Ovary (tissue), 10 donors: ENCODE measurements at regions of chr6 and their contacts with region 1.

Region 1: GRCh38 chr6:7725849-7726415 is at the start of gene BMP6:
- DNase-seq: peak; percentile 87 to 92 (median 91)
- H3K4me3 ChIP-seq: peak within 1 kb of the TSS; percentile 44
- H3K27ac ChIP-seq: no peak within 1 kb of the TSS
- H3K4me1 ChIP-seq: peaks cover 4% of the 10 kb centered on the region
- H3K27me3 ChIP-seq: no peaks in the 10 kb centered on the region
- CTCF ChIP-seq: peak in 1 of 3 donors; percentile 18
- EP300 ChIP-seq: no peak
- POLR2A ChIP-seq: no peak
- total RNA-seq, gene BMP6: 3.4 to 15.9 (median 6.7) TPM

Region 2: GRCh38 chr6:7784706-7785105 is 58.8 kb after region 1 on chr6:
- intact Hi-C with region 1: loop called in 2 of 4 experiments (anchors 2 to 5 kb)
- DNase-seq: no peak
- H3K4me3 ChIP-seq: no peak overlapping the region
- H3K27ac ChIP-seq: no peak overlapping the region
- H3K4me1 ChIP-seq: peaks cover 30% of the 10 kb centered on the region
- H3K27me3 ChIP-seq: no peaks in the 10 kb centered on the region
- CTCF ChIP-seq: no peak
- EP300 ChIP-seq: no peak
- POLR2A ChIP-seq: no peak

Region 3: GRCh38 chr6:7986219-7986618 is 260.3 kb after region 1 on chr6:
- intact Hi-C with region 1: loop called in 3 of 4 experiments (anchors 5 to 10 kb)
- DNase-seq: no peak
- H3K4me3 ChIP-seq: no peak overlapping the region
- H3K27ac ChIP-seq: no peak overlapping the region
- H3K4me1 ChIP-seq: no peaks in the 10 kb centered on the region
- H3K27me3 ChIP-seq: no peaks in the 10 kb centered on the region
- CTCF ChIP-seq: no peak
- EP300 ChIP-seq: no peak
- POLR2A ChIP-seq: no peak

Region 4: GRCh38 chr6:8006208-8006607 is 280.3 kb after region 1 on chr6:
- intact Hi-C with region 1: loop called in 1 of 4 experiments (anchors 5 kb)
- DNase-seq: no peak
- H3K4me3 ChIP-seq: no peak overlapping the region
- H3K27ac ChIP-seq: no peak overlapping the region
- H3K4me1 ChIP-seq: no peaks in the 10 kb centered on the region
- H3K27me3 ChIP-seq: no peaks in the 10 kb centered on the region
- CTCF ChIP-seq: peak in 2 of 3 donors; percentile 36 to 60
- EP300 ChIP-seq: no peak
- POLR2A ChIP-seq: no peak

Region 5: GRCh38 chr6:8229915-8230756 is 504.2 kb after region 1 on chr6:
- intact Hi-C with region 1: loop called in 1 of 4 experiments (anchors 10 kb)
- DNase-seq: no peak
- H3K4me3 ChIP-seq: no peak overlapping the region
- H3K27ac ChIP-seq: no peak overlapping the region
- H3K4me1 ChIP-seq: no peaks in the 10 kb centered on the region
- H3K27me3 ChIP-seq: no peaks in the 10 kb centered on the region
- CTCF ChIP-seq: no peak
- EP300 ChIP-seq: no peak
- POLR2A ChIP-seq: no peak